Psoas muscle (tissue), 8 donors: ENCODE measurements at regions of chr12 and their contacts with region 1.

Region 1: GRCh38 chr12:6944381-6945186 is 762 bp downstream of the C12orf57 start:
- DNase-seq: peak; percentile 93 to 97
- ATAC-seq: peak; percentile 78 to 83 (median 80)
- H3K4me3 ChIP-seq: peak overlapping the region; percentile 75
- H3K27ac ChIP-seq: peak overlapping the region; percentile 95
- H3K4me1 ChIP-seq: peaks cover 22% of the 10 kb centered on the region
- H3K27me3 ChIP-seq: no peaks in the 10 kb centered on the region
- CTCF ChIP-seq: peak; percentile 84

Region 2: DNA sequence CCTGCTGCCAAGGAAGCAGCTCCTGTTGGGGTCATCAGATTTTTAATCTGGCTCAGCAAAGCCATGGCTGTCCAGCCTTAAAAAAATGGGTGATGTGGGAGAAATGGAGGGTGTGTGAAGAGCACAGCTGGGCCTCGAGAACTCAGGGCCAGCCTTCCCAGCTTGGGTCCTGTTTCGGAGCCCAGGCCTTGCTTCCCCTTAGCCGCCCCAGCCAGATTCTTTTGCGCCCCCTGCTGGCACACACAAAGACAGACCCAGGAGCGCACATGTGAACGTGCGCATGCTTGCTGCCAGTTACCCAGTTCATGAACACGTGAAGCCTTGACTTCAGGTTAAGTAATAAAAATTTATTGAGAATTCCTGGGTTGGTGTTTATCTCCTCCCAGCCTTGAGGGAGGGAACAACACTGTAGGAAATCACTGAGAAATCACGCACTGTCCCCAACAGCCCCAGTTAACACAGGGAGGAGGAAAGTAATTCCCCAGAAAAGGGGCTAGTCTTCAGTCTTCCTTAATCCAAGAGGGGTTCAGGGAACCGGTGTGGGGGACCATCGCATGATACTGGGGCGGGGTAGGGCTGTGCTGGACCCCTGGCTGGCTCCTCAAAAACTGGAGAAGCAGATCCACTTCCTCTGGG is 20.6 kb after region 1 on chr12:
- intact Hi-C with region 1: loop called in 1 of 2 experiments (anchors 1 kb)
- DNase-seq: peak; percentile 89 to 93
- ATAC-seq: peak; percentile 68 to 83 (median 77)
- H3K4me3 ChIP-seq: no peak overlapping the region
- H3K27ac ChIP-seq: peak overlapping the region; percentile 85
- H3K4me1 ChIP-seq: peaks cover 29% of the 10 kb centered on the region
- H3K27me3 ChIP-seq: no peaks in the 10 kb centered on the region
- CTCF ChIP-seq: peak; percentile 87

Region 3: DNA sequence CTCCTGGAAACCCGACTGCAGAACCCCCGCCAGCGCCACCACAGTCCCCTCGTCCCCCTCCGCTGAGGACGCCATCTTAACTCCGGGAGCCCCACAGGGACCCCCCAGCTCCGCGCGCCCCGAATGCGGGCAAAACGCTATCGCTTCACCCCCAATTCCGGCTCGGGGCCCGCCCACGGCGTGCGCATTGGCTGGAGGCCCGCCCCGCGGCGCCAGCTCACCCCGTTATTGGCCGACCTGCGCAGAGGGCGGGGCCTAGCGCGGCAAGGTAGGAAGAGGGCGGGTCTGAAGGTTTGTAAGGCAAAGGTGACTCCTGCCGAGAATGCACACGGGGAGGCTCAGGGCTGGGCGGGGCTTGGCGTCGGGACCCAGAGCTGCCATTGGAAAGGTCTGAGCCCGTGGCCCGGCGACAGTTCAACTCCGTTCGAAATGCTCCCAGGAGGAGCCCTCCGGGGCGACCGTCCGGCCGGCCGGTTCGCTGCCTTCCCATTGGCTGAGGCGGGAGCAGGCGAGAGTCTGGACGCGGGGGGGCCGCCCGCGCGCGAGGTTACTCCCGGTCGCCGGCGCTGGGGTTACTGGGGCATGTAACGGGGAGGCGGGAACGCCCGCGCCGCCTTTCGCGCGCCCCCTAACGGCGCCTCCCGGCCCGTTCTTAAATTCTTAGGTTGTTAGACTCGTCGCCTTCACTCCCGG is 73.9 kb after region 1 on chr12 and contains the start of gene LPCAT3:
- intact Hi-C with region 1: loop called in 1 of 2 experiments (anchors 2 kb)
- DNase-seq: peak; percentile 99
- ATAC-seq: peak; percentile 92 to 97 (median 95)
- H3K4me3 ChIP-seq: peak within 1 kb of the TSS; percentile 97
- H3K27ac ChIP-seq: peak within 1 kb of the TSS; percentile 94
- H3K4me1 ChIP-seq: peaks cover 31% of the 10 kb centered on the region
- H3K27me3 ChIP-seq: no peaks in the 10 kb centered on the region
- CTCF ChIP-seq: peak; percentile 81
- total RNA-seq, gene LPCAT3: 24.0 to 56.5 (median 41.6) TPM

Region 4: DNA sequence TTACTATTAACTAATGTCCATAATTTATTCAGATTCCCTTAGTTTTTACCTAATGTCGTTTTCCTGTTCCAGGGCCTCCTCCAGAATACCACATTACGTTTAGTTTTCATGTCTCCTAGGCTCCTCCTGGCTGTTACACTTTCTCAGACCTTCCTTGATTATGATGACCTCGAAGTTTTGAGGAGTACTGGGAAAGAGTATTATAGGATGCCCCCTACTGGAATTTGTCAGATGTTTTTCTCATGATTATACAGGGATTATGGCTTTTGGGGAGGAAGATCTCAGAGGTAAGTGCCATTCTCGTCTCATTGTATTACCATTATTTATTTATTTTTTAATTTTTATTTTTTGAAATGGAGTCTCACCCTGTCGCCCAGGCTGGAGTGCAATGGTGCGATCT is 98.3 kb after region 1 on chr12:
- intact Hi-C with region 1: loop called in 1 of 2 experiments (anchors 5 kb)
- DNase-seq: no peak
- ATAC-seq: peak; percentile 57 to 76 (median 73)
- H3K4me3 ChIP-seq: no peak overlapping the region
- H3K27ac ChIP-seq: no peak overlapping the region
- H3K4me1 ChIP-seq: no peaks in the 10 kb centered on the region
- H3K27me3 ChIP-seq: no peaks in the 10 kb centered on the region
- CTCF ChIP-seq: peak; percentile 42

Region 5: GRCh38 chr12:7092229-7092985 is 147.8 kb after region 1 on chr12 and contains the start of gene C1R:
- intact Hi-C with region 1: loop called in 1 of 2 experiments (anchors 5 kb)
- DNase-seq: peak; percentile 80 to 89
- ATAC-seq: peak; percentile 57 to 73 (median 63)
- H3K4me3 ChIP-seq: peak within 1 kb of the TSS; percentile 65
- H3K27ac ChIP-seq: peak within 1 kb of the TSS; percentile 58
- H3K4me1 ChIP-seq: peaks cover 11% of the 10 kb centered on the region
- H3K27me3 ChIP-seq: no peaks in the 10 kb centered on the region
- CTCF ChIP-seq: peak; percentile 91
- total RNA-seq, gene C1R: 63.2 to 70.9 (median 68.1) TPM

Region 6: DNA sequence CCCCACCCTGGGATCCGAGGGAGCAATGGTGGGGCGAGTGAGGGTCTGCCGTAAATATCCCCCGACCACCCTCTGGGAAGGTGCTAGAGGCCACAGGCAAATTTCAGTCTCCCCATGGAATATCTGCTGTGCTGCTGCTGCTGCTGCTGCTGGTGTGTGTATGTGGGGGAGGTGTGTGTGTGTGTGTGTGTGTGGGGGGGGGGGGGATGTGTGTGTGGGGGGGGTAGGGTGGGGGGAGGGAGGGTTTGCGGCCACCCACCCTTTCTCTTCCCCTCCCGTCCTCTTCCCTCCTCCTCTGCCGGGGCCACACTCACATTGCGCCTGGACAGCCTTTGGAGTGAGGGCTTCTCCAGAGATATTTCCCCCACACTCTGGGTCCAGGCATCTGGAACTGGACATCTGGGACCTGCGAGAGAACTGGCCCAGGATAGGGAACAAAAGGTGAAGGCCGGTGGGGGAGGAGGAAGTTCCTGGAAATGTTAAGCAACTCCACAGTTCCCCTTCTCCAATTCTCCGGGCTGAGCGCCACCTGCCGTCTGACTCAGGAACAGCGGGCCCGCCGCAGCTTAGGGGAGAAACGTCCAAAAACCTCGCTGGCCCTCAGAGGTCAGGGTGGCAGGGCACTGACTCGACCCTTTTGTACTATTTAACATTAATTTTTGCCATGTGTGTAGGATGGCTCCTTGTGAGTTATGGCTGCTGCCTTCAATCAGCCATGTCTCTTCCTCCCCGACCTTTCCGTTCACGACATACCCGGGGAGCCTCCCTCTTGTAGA is 164.4 kb after region 1 on chr12 and contains the start of gene C1RL:
- intact Hi-C with region 1: loop called (anchors 1 to 5 kb)
- DNase-seq: peak; percentile 93 to 95
- ATAC-seq: peak; percentile 87 to 93 (median 88)
- H3K4me3 ChIP-seq: peak within 1 kb of the TSS; percentile 75
- H3K27ac ChIP-seq: peak within 1 kb of the TSS; percentile 80
- H3K4me1 ChIP-seq: peaks cover 14% of the 10 kb centered on the region
- H3K27me3 ChIP-seq: no peaks in the 10 kb centered on the region
- CTCF ChIP-seq: peak; percentile 98
- total RNA-seq, gene C1RL: 14.6 to 17.0 (median 15.5) TPM

Region 7: DNA sequence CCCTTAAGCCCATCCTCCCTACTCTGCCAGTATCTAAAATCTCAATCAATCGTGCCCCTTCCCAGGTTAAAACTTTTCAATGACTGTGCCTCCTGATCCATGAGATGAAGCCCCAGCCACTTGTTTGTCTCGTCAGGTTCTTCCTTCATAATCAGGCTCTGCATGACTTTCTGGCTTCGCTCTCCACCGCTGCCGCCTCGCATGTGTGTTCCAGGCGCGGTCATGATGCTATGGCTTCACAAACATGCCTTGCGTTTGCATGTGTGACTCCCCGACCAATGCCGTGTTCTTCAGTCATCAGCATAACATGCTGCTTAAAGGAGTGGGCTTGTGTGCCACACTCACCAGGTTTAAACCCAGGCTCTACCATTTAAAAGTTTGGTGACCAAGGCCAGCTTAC is 169.4 kb after region 1 on chr12:
- intact Hi-C with region 1: loop called (anchors 1 to 5 kb)
- DNase-seq: no peak
- ATAC-seq: no peak
- H3K4me3 ChIP-seq: no peak overlapping the region
- H3K27ac ChIP-seq: no peak overlapping the region
- H3K4me1 ChIP-seq: peaks cover 10% of the 10 kb centered on the region
- H3K27me3 ChIP-seq: no peaks in the 10 kb centered on the region
- CTCF ChIP-seq: no peak